Naive thymus-derived CD4-positive, alpha-beta T cell (primary cell): ENCODE measurements at regions of chr15 and their contacts with region 1.

Region 1: GRCh38 chr15:66386204-66387123 is at the start of gene MAP2K1:
- DNase-seq: peak; percentile 97 to 98 (median 98)
- ATAC-seq: peak; percentile 97
- H3K4me3 ChIP-seq: peak within 1 kb of the TSS; percentile 81
- H3K4me3 Mint-ChIP-seq: peak within 1 kb of the TSS; percentile 87 to 100 (median 98)
- H3K27ac ChIP-seq: peak within 1 kb of the TSS; percentile 85
- H3K27ac Mint-ChIP-seq: peak within 1 kb of the TSS; percentile 91 to 100 (median 99)
- H3K4me1 ChIP-seq: peaks cover 33 to 39% of the 10 kb centered on the region in 2 donors
- H3K4me1 Mint-ChIP-seq: peaks cover 42 to 61% (median 53%) of the 10 kb centered on the region in 7 donors
- H3K27me3 ChIP-seq: no peaks in the 10 kb centered on the region
- H3K27me3 Mint-ChIP-seq: no peaks in the 10 kb centered on the region
- total RNA-seq, gene MAP2K1: 37.7 to 97.2 (median 47.5) TPM

Region 2: DNA sequence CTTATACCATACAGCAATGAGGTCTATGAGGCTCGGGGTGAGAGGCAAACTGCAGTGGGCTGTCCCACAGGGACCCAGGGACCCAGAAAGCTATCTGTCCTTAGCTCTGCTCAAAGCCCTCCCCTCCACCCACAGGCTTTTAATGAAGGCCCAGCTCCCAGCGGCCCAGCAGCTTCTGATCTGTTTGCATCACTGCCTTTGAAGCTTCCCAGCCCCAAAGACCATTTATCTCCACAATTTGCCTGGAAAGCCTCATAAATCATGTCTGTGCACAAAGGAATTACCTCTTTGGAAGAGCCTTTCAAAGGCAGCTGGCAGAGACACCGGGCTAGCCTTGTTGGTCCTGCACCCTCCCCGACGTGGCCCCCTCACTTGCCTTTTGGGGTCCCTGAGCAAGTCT is 393.2 kb before region 1 on chr15:
- CTCF ChIA-PET with region 1: no interaction called
- POLR2A ChIA-PET with region 1: no interaction called
- intact Hi-C with region 1: no loop called
- DNase-seq: no peak
- ATAC-seq: no peak
- H3K4me3 ChIP-seq: no peak overlapping the region
- H3K4me3 Mint-ChIP-seq: no peak overlapping the region
- H3K27ac ChIP-seq: no peak overlapping the region
- H3K27ac Mint-ChIP-seq: no peak overlapping the region
- H3K4me1 ChIP-seq: no peaks in the 10 kb centered on the region
- H3K4me1 Mint-ChIP-seq: no peaks in the 10 kb centered on the region
- H3K27me3 ChIP-seq: no peaks in the 10 kb centered on the region
- H3K27me3 Mint-ChIP-seq: peaks cover 33 to 51% (median 37%) of the 10 kb centered on the region in 5 donors

Region 3: DNA sequence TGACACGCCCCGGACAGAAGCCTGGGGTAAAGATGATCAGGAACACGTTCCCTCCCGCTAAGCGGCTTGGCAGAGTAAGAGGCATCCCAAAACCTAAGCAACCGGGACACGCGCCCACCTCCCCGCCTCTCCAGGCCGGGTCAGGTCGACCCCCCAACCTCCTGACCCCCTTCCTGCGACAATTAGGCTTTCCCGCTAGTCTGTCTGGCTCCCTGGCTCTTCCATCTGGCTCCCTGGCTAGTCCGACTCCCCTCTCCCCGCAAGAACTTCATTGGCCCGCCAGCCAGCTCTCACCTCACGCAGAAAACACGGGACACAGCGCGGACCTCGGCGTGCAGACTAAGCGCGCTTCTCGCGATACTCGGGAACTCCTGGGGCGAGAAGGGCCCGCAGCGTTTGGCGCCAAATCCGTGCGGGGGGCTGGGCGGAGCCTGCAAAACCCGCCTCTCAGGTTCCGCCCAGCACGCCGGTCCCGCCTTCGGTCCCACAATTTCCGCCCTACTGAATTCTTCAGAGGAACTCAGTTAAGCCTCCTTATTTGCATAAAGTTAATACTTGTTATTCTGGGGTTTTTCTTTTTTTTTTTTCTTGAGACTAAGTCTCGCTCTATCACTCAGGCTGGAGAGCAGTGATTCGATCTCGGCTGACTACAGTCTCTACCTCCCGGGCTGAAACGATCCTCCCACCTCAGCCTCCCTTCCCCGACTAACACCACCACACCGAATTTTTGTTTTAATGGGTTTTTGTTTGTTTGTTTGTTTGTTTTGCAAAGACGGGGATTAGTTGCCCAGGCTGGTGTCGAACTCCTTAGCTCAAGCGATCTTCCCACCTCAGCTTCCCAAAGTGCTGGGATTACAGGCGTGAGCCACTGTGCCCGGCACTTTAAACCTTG is 29.9 kb before region 1 on chr15 and contains the start of gene TIPIN:
- CTCF ChIA-PET with region 1: interaction called, 4 read pairs
- POLR2A ChIA-PET with region 1: interaction called, 5 read pairs
- intact Hi-C with region 1: loop called (anchors 1 kb)
- DNase-seq: peak; percentile 90 to 96 (median 95)
- ATAC-seq: peak; percentile 99
- H3K4me3 ChIP-seq: peak within 1 kb of the TSS; percentile 92
- H3K4me3 Mint-ChIP-seq: peak within 1 kb of the TSS; percentile 92 to 100 (median 96)
- H3K27ac ChIP-seq: peak within 1 kb of the TSS; percentile 82
- H3K27ac Mint-ChIP-seq: peak within 1 kb of the TSS; percentile 90 to 98 (median 97)
- H3K4me1 ChIP-seq: peaks cover 4 to 6% of the 10 kb centered on the region in 2 donors
- H3K4me1 Mint-ChIP-seq: peaks cover 18 to 35% (median 26%) of the 10 kb centered on the region in 7 donors
- H3K27me3 ChIP-seq: no peaks in the 10 kb centered on the region
- H3K27me3 Mint-ChIP-seq: no peaks in the 10 kb centered on the region
- total RNA-seq, gene TIPIN: 3.8 to 28.2 (median 9.9) TPM

Region 4: DNA sequence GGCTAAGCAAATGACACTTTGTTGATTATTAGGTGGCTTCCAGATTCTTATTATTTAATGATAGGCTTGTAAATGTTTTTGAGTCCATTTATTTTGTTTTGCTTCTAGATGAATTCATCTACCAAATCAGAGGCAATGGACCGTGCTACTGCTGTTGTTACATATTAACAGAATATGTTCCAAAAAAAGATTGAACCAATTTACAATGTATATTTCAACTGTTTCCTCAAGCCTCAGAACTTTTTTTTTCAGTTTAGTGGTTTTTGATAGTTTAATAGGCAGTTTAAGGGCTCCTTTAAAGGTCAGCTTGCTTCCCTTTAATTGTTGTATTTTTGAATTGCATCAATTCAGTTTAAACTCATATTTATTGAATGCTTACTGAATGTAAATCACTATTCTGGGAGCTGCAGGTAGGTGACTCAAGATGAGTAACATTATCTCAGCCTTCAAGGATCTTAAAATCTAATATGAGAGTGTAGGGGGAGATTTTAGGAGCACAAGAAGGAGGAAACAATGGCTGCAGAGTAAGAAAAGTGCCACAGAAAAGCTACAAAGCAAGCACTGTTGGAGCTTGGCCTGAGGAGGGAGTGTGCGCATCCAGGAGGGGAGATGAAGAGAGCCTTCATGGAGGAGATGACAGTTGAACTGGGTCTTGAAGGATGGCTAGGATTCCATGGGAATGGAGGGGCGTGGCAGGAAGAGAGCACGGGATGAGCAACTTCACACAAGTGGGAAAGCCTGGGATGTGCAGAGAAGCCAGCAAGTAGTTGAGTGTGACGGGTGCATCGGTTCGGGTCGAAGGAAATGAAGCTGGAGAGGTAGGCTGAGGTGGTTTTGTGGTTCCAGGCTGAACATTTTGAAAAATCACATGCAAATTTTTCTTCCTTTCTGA is 14.9 kb after region 1 on chr15:
- CTCF ChIA-PET with region 1: interaction called, 16 read pairs
- POLR2A ChIA-PET with region 1: interaction called, 9 read pairs
- intact Hi-C with region 1: loop called in 1 of 2 experiments (anchors 1 kb)
- DNase-seq: peak in 5 of 9 donors; percentile 27 to 40 (median 33)
- ATAC-seq: peak; percentile 57
- H3K4me3 ChIP-seq: peak overlapping the region; percentile 37
- H3K4me3 Mint-ChIP-seq: peak overlapping the region; percentile 68 to 89 (median 82)
- H3K27ac ChIP-seq: peak overlapping the region; percentile 19
- H3K27ac Mint-ChIP-seq: peak overlapping the region; percentile 41 to 95 (median 80)
- H3K4me1 ChIP-seq: peaks cover 20 to 60% of the 10 kb centered on the region in 2 donors
- H3K4me1 Mint-ChIP-seq: peaks cover 46 to 87% (median 77%) of the 10 kb centered on the region in 7 donors
- H3K27me3 ChIP-seq: no peaks in the 10 kb centered on the region
- H3K27me3 Mint-ChIP-seq: no peaks in the 10 kb centered on the region

Region 5: GRCh38 chr15:66440501-66440900 is 54.0 kb after region 1 on chr15:
- CTCF ChIA-PET with region 1: no interaction called
- POLR2A ChIA-PET with region 1: interaction called, 5 read pairs
- intact Hi-C with region 1: loop called in 1 of 2 experiments (anchors 5 kb)
- DNase-seq: no peak
- ATAC-seq: no peak
- H3K4me3 ChIP-seq: no peak overlapping the region
- H3K4me3 Mint-ChIP-seq: no peak overlapping the region
- H3K27ac ChIP-seq: no peak overlapping the region
- H3K27ac Mint-ChIP-seq: no peak overlapping the region
- H3K4me1 ChIP-seq: no peaks in the 10 kb centered on the region
- H3K4me1 Mint-ChIP-seq: peaks cover 0 to 9% (median 4%) of the 10 kb centered on the region in 7 donors
- H3K27me3 ChIP-seq: no peaks in the 10 kb centered on the region
- H3K27me3 Mint-ChIP-seq: no peaks in the 10 kb centered on the region

Region 6: DNA sequence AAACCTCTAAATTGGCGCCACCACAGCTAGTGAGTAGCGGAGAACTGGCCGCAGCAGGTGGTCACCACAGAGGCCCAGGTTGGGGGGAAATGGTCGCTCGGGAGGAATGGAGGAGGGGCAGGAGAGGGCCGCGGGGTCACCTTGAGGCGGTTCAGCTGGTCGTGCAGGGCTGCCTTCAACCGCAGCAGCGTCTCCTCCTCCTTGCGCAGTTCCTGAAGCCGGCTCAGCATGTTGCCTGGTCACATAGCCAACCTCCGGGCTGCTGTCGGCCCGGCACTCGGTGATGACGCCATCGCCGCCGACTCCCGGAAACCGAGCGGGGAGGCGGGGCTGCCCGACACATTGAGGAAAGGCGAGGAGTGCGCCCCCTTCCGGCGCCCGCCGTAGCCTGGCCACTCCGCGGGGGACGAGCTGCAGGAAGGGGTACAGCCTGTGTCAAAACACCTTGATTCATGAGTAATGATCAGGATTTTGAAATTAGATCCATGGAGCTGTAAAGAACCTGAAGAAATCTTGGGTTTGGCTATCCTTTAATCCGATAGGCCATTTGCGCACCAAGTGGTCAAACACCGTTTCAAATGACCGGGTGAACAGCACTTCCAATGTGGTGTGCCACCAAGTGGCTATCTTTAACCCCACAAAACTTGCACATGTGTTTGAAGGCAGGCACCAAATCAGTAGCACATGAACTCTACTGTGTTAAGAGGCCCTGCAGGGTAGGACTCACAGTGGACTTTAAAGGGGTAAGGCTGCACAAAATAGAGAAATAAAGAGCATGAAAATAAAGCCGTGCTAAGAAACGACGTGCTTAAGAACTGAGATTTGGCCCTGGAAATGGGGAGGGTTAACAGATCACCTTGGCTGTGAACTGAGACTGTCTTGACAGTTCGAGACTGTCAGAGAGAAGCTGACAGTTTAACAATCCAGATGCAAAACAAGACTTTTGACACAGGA is 111.3 kb after region 1 on chr15 and contains the start of gene SNAPC5:
- CTCF ChIA-PET with region 1: interaction called, 62 read pairs
- POLR2A ChIA-PET with region 1: interaction called, 71 read pairs
- intact Hi-C with region 1: loop called (anchors 1 kb)
- DNase-seq: peak; percentile 94 to 99 (median 96)
- ATAC-seq: peak; percentile 97
- H3K4me3 ChIP-seq: peak within 1 kb of the TSS; percentile 80
- H3K4me3 Mint-ChIP-seq: peak within 1 kb of the TSS; percentile 89 to 98 (median 97)
- H3K27ac ChIP-seq: peak within 1 kb of the TSS; percentile 91
- H3K27ac Mint-ChIP-seq: peak within 1 kb of the TSS; percentile 94 to 99 (median 98)
- H3K4me1 ChIP-seq: peaks cover 18 to 28% of the 10 kb centered on the region in 2 donors
- H3K4me1 Mint-ChIP-seq: peaks cover 21 to 66% (median 49%) of the 10 kb centered on the region in 7 donors
- H3K27me3 ChIP-seq: no peaks in the 10 kb centered on the region
- H3K27me3 Mint-ChIP-seq: no peaks in the 10 kb centered on the region
- total RNA-seq, gene SNAPC5: 20.4 to 35.9 (median 25.0) TPM

Region 7: DNA sequence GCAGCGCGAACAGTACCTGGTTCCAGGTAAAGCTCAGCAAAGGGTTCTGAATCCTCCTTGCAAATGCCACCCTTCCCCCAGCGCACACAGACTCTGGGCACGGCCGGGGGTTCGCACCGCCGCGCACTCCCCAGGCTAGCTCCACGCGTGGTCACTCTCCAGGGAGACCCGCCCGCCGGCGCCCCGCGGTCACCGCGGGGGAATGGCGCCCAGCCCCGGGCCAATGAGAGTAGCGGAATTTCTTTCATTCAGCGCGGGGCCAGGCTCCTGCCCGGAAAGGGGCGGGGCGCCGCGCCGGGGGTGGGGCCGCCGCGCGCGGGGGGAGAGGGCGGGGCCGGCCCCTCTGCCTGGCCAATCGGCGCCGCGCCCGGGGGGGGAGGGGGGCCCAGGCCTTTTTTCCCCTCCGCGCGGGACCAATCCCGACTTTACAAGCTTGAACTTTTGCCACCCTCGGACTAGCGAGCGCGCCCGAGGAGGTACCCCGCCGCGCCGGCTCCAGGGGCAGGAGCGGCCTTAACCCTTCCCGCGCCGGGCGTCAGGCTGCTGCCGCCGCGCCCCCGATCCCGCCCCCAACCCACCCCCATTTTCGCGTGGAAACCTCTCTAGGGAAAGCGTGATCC is 314.4 kb after region 1 on chr15:
- CTCF ChIA-PET with region 1: no interaction called
- POLR2A ChIA-PET with region 1: no interaction called
- intact Hi-C with region 1: loop called in 1 of 2 experiments (anchors 2 kb)
- DNase-seq: peak; percentile 66 to 91 (median 83)
- ATAC-seq: peak; percentile 92
- H3K4me3 ChIP-seq: peak overlapping the region; percentile 76
- H3K4me3 Mint-ChIP-seq: peak overlapping the region; percentile 87 to 95 (median 93)
- H3K27ac ChIP-seq: peak overlapping the region; percentile 66
- H3K27ac Mint-ChIP-seq: peak overlapping the region in 8 of 9 donors; percentile 18 to 92 (median 78)
- H3K4me1 ChIP-seq: peaks cover 6 to 13% of the 10 kb centered on the region in 2 donors
- H3K4me1 Mint-ChIP-seq: peaks cover 10 to 25% (median 19%) of the 10 kb centered on the region in 7 donors
- H3K27me3 ChIP-seq: peaks cover 5 to 7% of the 10 kb centered on the region in 2 donors
- H3K27me3 Mint-ChIP-seq: peaks cover 6 to 26% (median 17%) of the 10 kb centered on the region in 5 donors

Region 8: DNA sequence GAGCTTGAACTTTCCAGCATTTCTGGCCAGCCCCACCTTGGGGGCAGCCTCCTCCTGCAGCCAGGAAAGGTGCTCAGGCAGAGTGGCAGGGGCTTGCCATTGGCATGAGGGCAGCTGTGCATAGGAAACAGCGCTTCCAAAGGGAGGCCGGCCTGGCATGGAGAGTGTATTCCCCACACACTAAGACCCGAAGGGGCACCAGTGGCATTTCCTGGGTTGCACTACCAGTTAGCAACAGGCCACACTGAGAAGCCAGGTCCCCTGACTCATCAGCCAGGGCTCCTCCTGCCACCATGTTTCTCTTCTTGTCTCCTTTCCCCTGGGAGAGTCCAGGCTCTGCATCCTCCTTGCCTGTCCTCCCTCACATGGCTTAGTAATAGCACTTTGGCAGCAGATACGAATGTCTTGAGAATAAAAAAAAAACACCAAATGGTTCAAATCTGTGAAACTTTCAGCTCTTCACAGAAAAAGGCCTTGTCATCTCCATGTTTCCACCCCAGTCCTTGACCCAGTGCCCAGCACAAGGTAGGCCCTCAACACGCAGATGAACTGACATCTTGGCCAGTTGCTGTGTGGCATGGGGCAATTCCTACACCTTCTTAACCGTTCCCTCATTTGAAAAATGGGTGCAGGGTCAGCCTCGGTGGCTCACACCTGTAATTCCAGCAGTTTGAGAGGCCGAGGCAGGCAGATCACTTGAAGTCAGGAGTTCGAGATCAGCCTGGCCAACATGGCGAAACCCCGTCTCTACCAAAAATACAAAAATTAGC is 496.0 kb after region 1 on chr15:
- CTCF ChIA-PET with region 1: no interaction called
- POLR2A ChIA-PET with region 1: no interaction called
- intact Hi-C with region 1: no loop called
- DNase-seq: peak in 1 of 9 donors; percentile 13
- ATAC-seq: no peak
- H3K4me3 ChIP-seq: no peak overlapping the region
- H3K4me3 Mint-ChIP-seq: no peak overlapping the region
- H3K27ac ChIP-seq: no peak overlapping the region
- H3K27ac Mint-ChIP-seq: no peak overlapping the region
- H3K4me1 ChIP-seq: no peaks in the 10 kb centered on the region
- H3K4me1 Mint-ChIP-seq: no peaks in the 10 kb centered on the region
- H3K27me3 ChIP-seq: no peaks in the 10 kb centered on the region
- H3K27me3 Mint-ChIP-seq: peaks cover 0 to 4% (median 3%) of the 10 kb centered on the region in 5 donors

Region 9: DNA sequence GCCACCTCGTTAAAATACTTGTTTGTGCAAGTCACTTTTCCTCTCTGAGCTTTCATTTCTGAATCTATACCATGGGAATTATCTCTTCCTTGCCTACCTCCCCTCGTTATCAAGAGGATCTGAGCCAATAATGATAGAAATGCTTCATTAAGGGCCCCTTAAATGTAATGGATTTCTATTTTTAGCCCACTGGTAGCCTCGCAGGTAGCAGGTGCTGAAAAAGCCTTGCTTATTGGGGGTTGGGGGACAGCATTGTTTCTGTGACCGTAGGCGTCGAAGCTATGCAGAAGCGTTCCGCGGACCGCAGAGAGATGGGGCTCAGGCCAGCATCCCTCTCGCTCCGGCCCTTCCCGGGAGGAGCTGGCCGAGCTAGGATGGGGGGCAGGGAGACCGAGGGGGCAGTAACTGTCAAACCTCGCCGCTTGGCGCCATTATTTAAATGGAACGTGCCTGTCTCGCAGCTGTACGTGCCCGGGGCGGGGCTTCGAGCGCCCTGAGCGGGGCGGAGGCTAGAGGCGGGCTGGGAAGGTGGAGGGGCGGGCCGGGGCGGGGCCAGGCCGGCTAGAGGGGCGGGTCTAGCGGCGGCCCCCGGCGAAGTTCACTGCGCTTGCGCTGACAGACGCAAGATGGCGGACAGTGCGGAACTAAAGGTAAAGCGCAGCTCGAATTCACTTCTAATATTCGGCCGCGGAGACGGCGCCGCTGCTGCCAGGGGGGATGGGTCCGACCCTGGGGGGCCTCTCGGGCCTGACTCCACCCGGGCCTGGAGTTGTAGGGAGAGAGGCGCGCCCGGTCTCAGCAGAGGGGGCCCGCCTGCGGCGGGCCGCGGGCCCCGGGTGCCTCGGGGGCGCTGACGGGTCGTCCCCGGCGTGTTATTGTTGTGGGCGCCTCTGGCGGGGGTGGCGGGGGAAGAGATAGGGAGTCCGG is 1667.5 kb after region 1 on chr15 and contains the start of gene PIAS1:
- CTCF ChIA-PET with region 1: no interaction called
- POLR2A ChIA-PET with region 1: no interaction called
- intact Hi-C with region 1: loop called in 1 of 2 experiments (anchors 2 kb)
- DNase-seq: peak; percentile 87 to 94 (median 92)
- ATAC-seq: peak; percentile 96
- H3K4me3 ChIP-seq: peak within 1 kb of the TSS; percentile 87
- H3K4me3 Mint-ChIP-seq: peak within 1 kb of the TSS; percentile 89 to 97 (median 95)
- H3K27ac ChIP-seq: peak within 1 kb of the TSS; percentile 93
- H3K27ac Mint-ChIP-seq: peak within 1 kb of the TSS; percentile 84 to 97 (median 92)
- H3K4me1 ChIP-seq: peaks cover 21 to 35% of the 10 kb centered on the region in 2 donors
- H3K4me1 Mint-ChIP-seq: peaks cover 28 to 46% (median 39%) of the 10 kb centered on the region in 7 donors
- H3K27me3 ChIP-seq: no peaks in the 10 kb centered on the region
- H3K27me3 Mint-ChIP-seq: peaks cover 0 to 15% (median 0%) of the 10 kb centered on the region in 5 donors
- total RNA-seq, gene PIAS1: 41.3 to 103 (median 90.9) TPM